Activated CD4-positive, alpha-beta T cell treated with anti-CD3 and anti-CD28 coated beads, Interleukin-2, amount 10 ng/mL, durations not matched to agents 24 days and 14 days (primary cell): ENCODE measurements at regions of chr20 and their contacts with region 1.

Region 1: DNA sequence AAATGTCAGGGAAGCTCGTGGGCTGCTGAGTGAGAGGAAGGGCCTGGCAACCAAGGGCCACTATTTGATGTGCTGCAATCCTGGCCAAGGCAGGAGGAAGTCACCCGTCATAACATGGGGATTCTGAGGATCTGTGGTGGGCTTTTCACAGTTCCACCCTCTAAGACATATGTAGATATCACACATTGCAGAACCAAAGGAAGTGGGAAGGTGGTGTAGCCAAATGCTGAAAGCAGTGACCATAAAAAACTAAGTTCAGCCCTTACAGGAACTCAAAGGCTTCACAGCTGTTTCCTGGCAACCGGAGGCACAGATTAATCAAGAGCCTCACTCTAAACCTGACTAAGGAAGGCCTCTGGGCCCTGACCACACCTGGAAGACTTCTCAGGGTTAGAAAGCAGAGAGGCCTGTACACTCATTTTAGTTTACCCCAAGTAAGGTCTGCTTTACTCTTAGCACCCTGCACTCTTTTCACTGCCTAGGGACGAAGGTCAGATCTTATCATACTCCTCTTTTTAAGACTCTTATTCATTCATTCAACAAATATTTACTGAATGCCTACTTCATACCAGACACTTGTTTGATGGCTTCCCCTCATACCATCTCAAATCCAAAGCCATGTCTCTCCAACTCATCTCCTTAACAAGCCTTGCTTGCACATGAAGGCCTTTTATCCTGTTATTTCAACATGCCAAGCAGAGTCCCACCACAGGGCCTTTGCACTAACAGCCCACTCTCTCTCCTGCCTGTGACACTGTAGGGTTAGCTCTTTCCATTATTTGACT is 2.6 kb downstream of the UBE2V1 start:
- DNase-seq: peak; percentile 83
- H3K4me3 Mint-ChIP-seq: peak overlapping the region; percentile 98
- H3K27ac Mint-ChIP-seq: peak overlapping the region; percentile 97
- H3K4me1 Mint-ChIP-seq: peaks cover 73% of the 10 kb centered on the region
- H3K27me3 Mint-ChIP-seq: no peaks in the 10 kb centered on the region

Region 2: DNA sequence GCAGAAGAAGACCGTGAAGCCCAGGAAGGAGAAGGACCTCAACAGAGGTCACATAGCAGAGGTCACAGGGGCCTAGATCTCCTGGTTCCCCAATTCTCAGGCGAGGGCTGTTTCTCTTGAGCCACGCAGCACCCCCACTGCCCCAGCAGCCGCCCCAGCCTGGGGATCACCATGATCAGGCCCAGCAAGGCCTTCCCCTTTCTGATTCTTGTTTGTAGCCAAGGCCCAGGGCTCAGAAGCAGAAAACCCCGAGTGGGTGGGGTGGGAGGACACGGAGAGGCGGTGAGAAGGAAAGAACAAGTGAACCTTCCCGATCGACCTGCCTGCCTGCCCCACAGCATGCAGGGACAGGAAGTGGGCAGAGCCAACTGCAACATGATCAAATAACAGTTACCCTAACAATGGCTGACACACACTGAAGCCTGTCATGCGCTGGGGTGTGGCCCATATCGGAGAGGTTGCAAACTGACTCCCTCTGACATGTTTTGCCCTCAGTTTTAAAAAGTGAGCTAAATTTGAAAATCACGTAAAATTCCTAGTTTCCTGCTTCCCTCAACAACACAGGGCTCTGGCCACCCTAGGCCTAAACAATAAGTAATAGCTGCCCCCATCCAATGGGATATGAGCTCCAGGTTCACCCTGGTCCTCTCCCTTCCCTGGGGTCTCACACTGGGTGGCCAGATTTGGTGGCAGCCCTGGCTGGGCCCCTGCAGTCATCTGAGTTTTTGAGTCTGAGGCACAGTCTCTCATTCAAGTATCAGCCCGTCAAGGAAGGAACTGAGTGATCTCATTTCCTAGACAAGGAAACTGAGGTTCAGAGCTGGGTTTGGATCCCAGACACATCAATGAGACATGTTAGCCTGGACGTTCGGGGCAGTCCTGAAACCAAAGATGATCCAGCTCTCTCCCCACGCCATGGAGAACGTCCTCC is 36.7 kb after region 1 on chr20:
- intact Hi-C with region 1: loop called (anchors 2 kb)
- DNase-seq: peak; percentile 93
- H3K4me3 Mint-ChIP-seq: peak overlapping the region; percentile 74
- H3K27ac Mint-ChIP-seq: peak overlapping the region; percentile 97
- H3K4me1 Mint-ChIP-seq: peaks cover 63% of the 10 kb centered on the region
- H3K27me3 Mint-ChIP-seq: no peaks in the 10 kb centered on the region